Esophagus muscularis mucosa (tissue), 4 donors: ENCODE measurements at regions of chr7 and their contacts with region 1.

Region 1: DNA sequence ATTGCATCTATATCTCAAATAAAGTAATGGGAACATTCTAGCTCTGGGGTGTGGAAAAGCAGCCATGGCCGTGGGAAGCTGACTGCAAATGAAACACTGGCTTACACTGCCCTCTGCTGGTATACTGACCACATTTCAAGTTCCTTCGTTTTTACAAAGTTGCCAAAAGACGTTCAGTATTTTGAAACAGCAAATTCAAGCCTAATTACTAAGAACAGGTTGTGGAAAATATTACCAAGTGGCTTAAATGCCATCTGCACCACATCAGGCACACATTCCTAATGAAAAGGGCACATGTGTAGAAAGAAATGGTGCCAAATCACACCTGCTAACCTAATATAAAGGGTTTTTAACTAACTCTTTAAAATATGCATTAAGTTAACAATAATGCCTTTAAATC is 83.9 kb downstream of the JAZF1 start:
- DNase-seq: peak; percentile 92
- H3K4me3 ChIP-seq: no peak overlapping the region
- H3K27ac ChIP-seq: peak overlapping the region; percentile 21 to 56 (median 48)
- H3K4me1 ChIP-seq: peaks cover 23 to 71% (median 44%) of the 10 kb centered on the region in 4 donors
- H3K27me3 ChIP-seq: no peaks in the 10 kb centered on the region
- CTCF ChIP-seq: peak; percentile 83 to 90 (median 90)
- EP300 ChIP-seq: no peak
- POLR2A ChIP-seq: no peak

Region 2: GRCh38 chr7:27739909-27740448 is 356.7 kb before region 1 on chr7 and contains the start of gene TAX1BP1:
- intact Hi-C with region 1: loop called (anchors 10 kb)
- DNase-seq: peak; percentile 98
- H3K4me3 ChIP-seq: peak within 1 kb of the TSS; percentile 77 to 97 (median 83)
- H3K27ac ChIP-seq: peak within 1 kb of the TSS; percentile 94 to 99 (median 96)
- H3K4me1 ChIP-seq: peaks cover 20 to 53% (median 47%) of the 10 kb centered on the region in 4 donors
- H3K27me3 ChIP-seq: no peaks in the 10 kb centered on the region
- CTCF ChIP-seq: no peak
- EP300 ChIP-seq: no peak
- POLR2A ChIP-seq: peak; percentile 89
- total RNA-seq, gene TAX1BP1: 107 to 139 (median 127) TPM

Region 3: GRCh38 chr7:28062197-28062991 is 34.3 kb before region 1 on chr7:
- intact Hi-C with region 1: loop called (anchors 5 kb)
- DNase-seq: no peak
- H3K4me3 ChIP-seq: no peak overlapping the region
- H3K27ac ChIP-seq: no peak overlapping the region
- H3K4me1 ChIP-seq: peaks cover 5 to 58% (median 50%) of the 10 kb centered on the region in 4 donors
- H3K27me3 ChIP-seq: no peaks in the 10 kb centered on the region
- CTCF ChIP-seq: peak; percentile 64 to 75 (median 70)
- EP300 ChIP-seq: no peak
- POLR2A ChIP-seq: no peak